Activated CD4-positive, alpha-beta T cell treated with anti-CD3 and anti-CD28 coated beads, Interleukin-2, amount 10 ng/mL, durations not matched to agents 7 days and 5 days (primary cell): ENCODE measurements at regions of chr5 and their contacts with region 1.

Region 1: GRCh38 chr5:151935135-151935695 is 10.6 kb upstream of the GLRA1 start:
- DNase-seq: no peak
- H3K4me3 Mint-ChIP-seq: no peak overlapping the region
- H3K27ac Mint-ChIP-seq: no peak overlapping the region
- H3K4me1 Mint-ChIP-seq: no peaks in the 10 kb centered on the region
- H3K27me3 Mint-ChIP-seq: no peaks in the 10 kb centered on the region

Region 2: DNA sequence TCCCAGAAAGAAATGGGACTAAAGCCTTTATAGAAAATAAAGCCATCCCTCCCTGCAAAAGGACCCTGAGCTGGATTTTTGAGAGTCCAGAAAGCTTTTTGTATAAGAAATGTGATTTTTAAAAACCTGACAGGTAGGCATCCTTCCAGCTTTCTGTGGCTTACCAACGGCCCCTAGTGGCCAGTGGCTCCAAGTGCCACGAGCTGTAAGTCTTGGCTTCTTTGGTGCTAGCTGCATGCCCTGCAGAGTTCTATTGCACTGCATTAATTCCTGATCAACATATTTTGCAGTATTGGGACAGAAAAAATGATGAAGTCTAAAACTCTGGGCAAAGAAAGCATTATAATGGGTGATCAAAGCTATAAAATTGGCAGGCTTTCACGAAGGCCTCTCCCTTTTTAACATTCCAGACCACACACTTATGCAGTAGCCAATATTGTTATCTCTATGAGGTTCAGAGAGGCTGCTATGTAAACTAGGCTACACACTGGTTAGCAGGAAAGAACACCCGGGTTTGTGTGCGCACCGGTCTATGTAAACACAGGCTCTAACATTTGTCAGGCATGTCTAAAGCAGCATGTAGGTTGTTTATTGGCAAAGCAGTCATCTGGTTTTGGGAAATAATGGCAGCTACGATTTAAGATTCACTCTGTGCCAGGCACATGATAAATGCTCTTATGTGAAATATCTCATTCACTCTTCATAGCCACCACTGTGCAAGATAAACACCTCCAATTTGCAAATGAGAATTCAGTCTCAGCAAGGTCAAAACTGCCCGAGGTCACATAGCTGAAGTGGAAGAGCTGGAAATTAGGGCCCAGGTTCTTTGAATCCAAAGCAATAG is 414.7 kb after region 1 on chr5:
- CTCF ChIA-PET with region 1: no interaction called
- POLR2A ChIA-PET with region 1: interaction called, 12 read pairs
- DNase-seq: peak; percentile 40
- H3K4me3 Mint-ChIP-seq: no peak overlapping the region
- H3K27ac Mint-ChIP-seq: no peak overlapping the region
- H3K4me1 Mint-ChIP-seq: no peaks in the 10 kb centered on the region
- H3K27me3 Mint-ChIP-seq: peaks cover 2% of the 10 kb centered on the region